Head of caudate nucleus (tissue), 42 donors: ENCODE measurements at regions of chr14 and their contacts with region 1.

Region 1: DNA sequence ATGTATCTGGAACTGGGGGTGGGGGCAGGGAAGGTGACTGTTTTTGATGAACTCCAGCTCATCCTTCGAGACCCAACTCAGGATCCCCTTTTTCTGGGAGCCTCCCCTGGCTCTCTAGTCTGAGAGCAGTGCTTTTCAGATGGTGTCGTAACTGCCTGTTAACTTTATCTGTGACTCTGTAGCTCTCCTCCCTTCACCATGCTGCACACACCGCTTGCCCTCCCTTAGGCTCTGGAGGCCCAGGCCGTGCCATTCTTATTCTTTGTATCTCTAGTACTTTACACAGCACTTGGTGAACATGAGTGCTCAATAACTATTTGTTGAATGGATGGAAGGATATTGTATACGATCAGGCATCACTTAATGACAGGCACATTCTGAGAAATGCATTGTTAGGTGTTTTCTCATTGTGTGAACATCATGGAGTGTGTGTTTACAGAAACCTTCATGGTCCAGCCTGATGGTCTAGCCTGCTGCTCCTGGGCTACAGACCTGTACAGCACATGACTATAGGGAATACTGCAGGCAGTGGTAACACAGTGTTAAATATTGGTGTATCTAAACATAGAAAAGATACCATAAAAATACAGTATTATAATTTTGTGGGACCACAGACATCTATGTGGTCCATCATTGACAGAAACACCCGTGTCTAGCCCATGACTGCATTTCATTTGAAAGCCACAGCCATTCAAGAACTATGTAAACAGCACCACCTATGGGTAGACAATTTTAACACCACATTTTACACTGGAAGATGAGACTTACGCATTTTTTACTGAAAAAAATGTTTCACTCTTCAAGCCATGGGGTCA is 91.8 kb downstream of the EML1 start:
- DNase-seq: peak in 17 of 42 donors; percentile 38 to 79 (median 47)

Region 2: GRCh38 chr14:99683619-99684355 is 201.3 kb before region 1 on chr14 and contains the start of gene CYP46A1:
- intact Hi-C with region 1: loop called (anchors 5 kb)
- DNase-seq: peak; percentile 98 to 100 (median 100)

Region 3: GRCh38 chr14:99729991-99730868 is 154.8 kb before region 1 on chr14:
- intact Hi-C with region 1: loop called (anchors 2 kb)
- DNase-seq: peak in 41 of 42 donors; percentile 54 to 91 (median 80)